ENCODE measurements at regions of chr20 and their contacts with region 1.

Region 1: GRCh38 chr20:23606652-23607049 is 934 bp upstream of the CST9 start:
- DNase-seq: peak; percentile 83
- ATAC-seq: peak; percentile 84
- H3K4me3 Mint-ChIP-seq: no peak overlapping the region
- H3K27ac Mint-ChIP-seq: no peak overlapping the region
- H3K4me1 Mint-ChIP-seq: no peaks in the 10 kb centered on the region
- H3K27me3 Mint-ChIP-seq: no peaks in the 10 kb centered on the region

Region 2: GRCh38 chr20:23441850-23442313 is 164.8 kb before region 1 on chr20:
- CTCF ChIA-PET with region 1: interaction called, 28 read pairs
- POLR2A ChIA-PET with region 1: no interaction called
- intact Hi-C with region 1: loop called (anchors 1 kb)
- DNase-seq: peak; percentile 77
- ATAC-seq: peak; percentile 83
- H3K4me3 Mint-ChIP-seq: no peak overlapping the region
- H3K27ac Mint-ChIP-seq: no peak overlapping the region
- H3K4me1 Mint-ChIP-seq: no peaks in the 10 kb centered on the region
- H3K27me3 Mint-ChIP-seq: peaks cover 2% of the 10 kb centered on the region

Region 3: GRCh38 chr20:23588434-23589403 is 17.9 kb before region 1 on chr20:
- CTCF ChIA-PET with region 1: no interaction called
- POLR2A ChIA-PET with region 1: no interaction called
- intact Hi-C with region 1: no loop called
- DNase-seq: no peak
- ATAC-seq: no peak
- H3K4me3 Mint-ChIP-seq: no peak overlapping the region
- H3K27ac Mint-ChIP-seq: no peak overlapping the region
- H3K4me1 Mint-ChIP-seq: no peaks in the 10 kb centered on the region
- H3K27me3 Mint-ChIP-seq: peaks cover 14% of the 10 kb centered on the region

Region 4: GRCh38 chr20:24001712-24002405 is 395.2 kb after region 1 on chr20:
- CTCF ChIA-PET with region 1: no interaction called
- POLR2A ChIA-PET with region 1: no interaction called
- intact Hi-C with region 1: no loop called
- DNase-seq: no peak
- ATAC-seq: no peak
- H3K4me3 Mint-ChIP-seq: no peak overlapping the region
- H3K27ac Mint-ChIP-seq: no peak overlapping the region
- H3K4me1 Mint-ChIP-seq: no peaks in the 10 kb centered on the region
- H3K27me3 Mint-ChIP-seq: no peaks in the 10 kb centered on the region